ENCODE measurements at regions of chr15 and their contacts with region 1.

Region 1: DNA sequence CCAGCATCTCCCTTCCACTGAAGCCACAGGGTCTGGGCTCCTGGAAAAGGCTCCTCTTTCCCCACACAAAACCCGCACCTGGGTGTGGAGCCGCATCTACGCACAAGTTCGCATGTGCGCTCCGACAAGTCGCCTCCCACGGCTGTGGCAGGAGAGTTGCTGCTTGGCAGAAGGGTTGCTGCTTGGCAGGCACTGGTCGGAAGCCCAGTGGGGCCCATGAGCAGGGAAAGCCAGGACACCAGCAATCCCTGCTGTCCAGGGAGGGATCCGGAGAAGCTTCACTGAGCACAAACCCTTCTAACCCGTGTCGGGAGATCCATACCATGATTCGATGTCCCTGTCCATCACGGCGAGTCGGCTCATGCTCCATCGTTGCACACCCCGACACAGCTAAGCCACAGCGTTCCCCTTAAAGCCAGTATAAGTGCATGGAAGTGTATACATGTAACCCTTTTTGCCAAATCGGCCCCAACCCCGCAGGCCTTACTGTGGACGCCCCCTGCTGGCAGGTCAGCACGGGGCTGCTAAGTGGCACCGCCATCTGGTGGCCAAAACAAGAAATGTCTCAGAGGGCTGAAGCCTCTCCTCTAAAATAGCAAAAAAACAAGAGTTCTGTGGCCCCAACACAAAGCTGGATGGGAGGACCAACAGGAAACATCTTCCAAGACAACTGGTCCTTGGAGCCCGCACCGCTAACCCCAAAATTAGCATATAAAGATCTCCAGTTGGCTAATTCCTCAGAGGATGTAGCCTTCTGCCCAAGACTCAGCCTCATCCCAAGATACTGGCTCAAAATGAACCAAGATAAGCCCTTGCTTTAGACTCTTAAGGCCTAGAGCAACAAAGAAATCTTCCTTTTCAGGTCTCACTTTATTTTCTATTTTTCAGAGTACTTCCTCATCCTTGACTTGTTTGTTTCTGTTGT is 8.3 kb downstream of the ANKRD63 start:
- H3K4me3 Mint-ChIP-seq: no peak overlapping the region
- H3K27ac Mint-ChIP-seq: peak overlapping the region; percentile 64
- H3K4me1 Mint-ChIP-seq: peaks cover 50% of the 10 kb centered on the region
- H3K27me3 Mint-ChIP-seq: peaks cover 13% of the 10 kb centered on the region

Region 2: GRCh38 chr15:40044717-40045571 is 229.7 kb before region 1 on chr15:
- intact Hi-C with region 1: loop called (anchors 1 kb)
- H3K4me3 Mint-ChIP-seq: peak overlapping the region; percentile 70
- H3K27ac Mint-ChIP-seq: peak overlapping the region; percentile 74
- H3K4me1 Mint-ChIP-seq: peaks cover 61% of the 10 kb centered on the region
- H3K27me3 Mint-ChIP-seq: no peaks in the 10 kb centered on the region

Region 3: GRCh38 chr15:40217159-40217824 is 57.3 kb before region 1 on chr15:
- intact Hi-C with region 1: loop called (anchors 1 kb)
- H3K4me3 Mint-ChIP-seq: no peak overlapping the region
- H3K27ac Mint-ChIP-seq: no peak overlapping the region
- H3K4me1 Mint-ChIP-seq: no peaks in the 10 kb centered on the region
- H3K27me3 Mint-ChIP-seq: no peaks in the 10 kb centered on the region

Region 4: DNA sequence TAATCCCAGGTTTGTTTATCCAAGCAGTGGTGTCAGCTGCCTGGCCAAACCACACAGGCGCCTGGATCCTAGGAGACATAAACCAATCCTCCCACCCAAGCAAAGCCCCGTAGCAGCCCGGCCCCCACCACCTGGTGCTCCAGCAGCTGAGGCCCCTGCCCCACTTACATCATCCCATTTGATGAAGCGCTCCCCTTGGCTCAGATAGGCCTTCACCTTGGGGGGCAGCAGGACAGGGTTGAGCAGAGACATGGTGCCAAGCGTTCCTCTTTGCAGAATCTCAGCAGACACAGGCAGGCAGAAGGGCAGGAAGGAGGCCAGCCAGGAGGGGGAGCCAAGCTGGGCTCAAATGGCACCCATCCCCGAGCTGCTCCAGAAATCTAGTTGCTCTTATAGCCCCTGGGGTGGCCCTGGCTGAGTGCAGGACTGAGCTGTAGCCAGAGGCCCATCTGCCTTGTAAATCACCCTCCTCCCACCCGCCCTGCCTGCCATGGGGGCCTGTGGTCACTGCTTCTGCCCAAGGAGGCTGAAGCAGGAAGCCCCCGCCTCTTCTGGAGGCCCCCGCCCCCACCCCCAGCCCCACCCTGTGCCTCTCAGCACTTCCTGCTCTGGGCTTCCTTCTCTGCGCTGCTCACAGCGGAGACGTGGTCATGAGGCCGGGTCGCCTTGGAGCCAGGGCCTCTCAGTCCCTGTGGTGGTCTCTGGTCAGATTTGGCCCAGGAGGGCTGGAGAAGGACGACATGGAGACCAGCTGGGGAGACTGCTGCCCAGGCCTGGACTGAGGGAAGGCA is 33.0 kb after region 1 on chr15 and contains the start of gene PLCB2:
- intact Hi-C with region 1: loop called (anchors 1 kb)
- H3K4me3 Mint-ChIP-seq: peak within 1 kb of the TSS; percentile 99
- H3K27ac Mint-ChIP-seq: peak within 1 kb of the TSS; percentile 91
- H3K4me1 Mint-ChIP-seq: peaks cover 67% of the 10 kb centered on the region
- H3K27me3 Mint-ChIP-seq: peaks cover 8% of the 10 kb centered on the region

Region 5: GRCh38 chr15:40338041-40338657 is 63.5 kb after region 1 on chr15:
- intact Hi-C with region 1: loop called (anchors 2 kb)
- H3K4me3 Mint-ChIP-seq: no peak overlapping the region
- H3K27ac Mint-ChIP-seq: peak overlapping the region; percentile 100
- H3K4me1 Mint-ChIP-seq: peaks cover 90% of the 10 kb centered on the region
- H3K27me3 Mint-ChIP-seq: no peaks in the 10 kb centered on the region

Region 6: GRCh38 chr15:40421246-40422157 is 146.9 kb after region 1 on chr15:
- intact Hi-C with region 1: no loop called
- H3K4me3 Mint-ChIP-seq: peak overlapping the region; percentile 32
- H3K27ac Mint-ChIP-seq: no peak overlapping the region
- H3K4me1 Mint-ChIP-seq: peaks cover 25% of the 10 kb centered on the region
- H3K27me3 Mint-ChIP-seq: peaks cover 6% of the 10 kb centered on the region